IMR-90 (cell line): ENCODE measurements at regions of chr14 and their contacts with region 1.

Region 1: DNA sequence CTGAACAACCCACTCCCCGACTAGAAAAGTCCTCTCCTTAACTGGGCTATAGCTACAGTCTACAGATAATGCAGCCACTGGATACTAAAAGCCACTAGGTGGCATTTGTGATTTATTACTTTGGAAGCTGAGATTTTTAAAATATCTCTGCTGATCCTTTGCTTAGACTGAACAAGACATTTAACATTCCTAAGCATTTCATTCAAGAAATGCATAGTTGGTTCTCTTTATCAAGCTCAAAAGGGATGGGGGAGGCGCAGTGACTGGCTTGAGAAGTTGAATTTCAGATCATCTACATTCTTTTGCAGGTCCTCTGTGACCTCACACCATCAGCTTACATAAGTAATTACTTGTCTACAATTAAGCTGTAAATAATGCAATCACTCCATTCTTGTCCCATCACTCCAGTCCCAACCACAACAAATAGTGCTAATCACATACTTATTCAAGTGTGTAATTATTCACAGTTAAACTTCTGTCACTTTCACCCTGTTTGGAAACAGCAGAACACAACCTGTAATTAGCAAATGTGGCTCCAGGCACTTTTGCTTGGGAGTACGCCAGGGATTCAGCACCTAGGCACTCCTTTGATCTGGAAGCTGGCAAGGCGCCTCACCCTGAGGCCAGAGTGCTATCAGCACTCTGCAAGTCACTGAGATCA is 203.6 kb downstream of the NOVA1 start:
- DNase-seq: peak; percentile 12
- ATAC-seq: peak; percentile 89
- H3K4me3 ChIP-seq: no peak overlapping the region
- H3K27ac ChIP-seq: no peak overlapping the region
- H3K4me1 ChIP-seq: no peaks in the 10 kb centered on the region
- H3K27me3 ChIP-seq: no peaks in the 10 kb centered on the region
- CTCF ChIP-seq: peak; percentile 46
- POLR2A ChIP-seq: no peak
- RAD21 ChIP-seq: peak; percentile 48

Region 2: DNA sequence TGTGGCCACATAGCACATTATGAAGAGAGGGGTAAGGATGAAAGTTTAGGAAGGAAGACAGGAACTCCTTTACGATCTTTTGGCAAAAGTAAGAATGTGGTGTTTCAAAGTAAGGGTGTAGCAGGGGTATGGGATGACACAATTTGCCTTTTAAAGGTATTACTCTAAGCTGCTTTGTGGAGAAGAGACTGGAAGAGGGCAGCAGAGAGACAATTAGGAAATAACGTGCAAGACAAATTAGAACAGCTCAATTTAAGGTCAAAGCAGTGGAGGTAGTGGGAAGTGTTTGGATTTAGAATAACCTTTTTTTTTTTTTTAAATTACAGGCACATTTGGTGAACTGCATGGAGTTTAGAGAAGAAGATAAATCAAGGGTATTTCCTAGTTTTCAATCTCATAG is 139.1 kb before region 1 on chr14:
- CTCF ChIA-PET with region 1: no interaction called
- POLR2A ChIA-PET with region 1: no interaction called
- dilution Hi-C with region 1: no loop called
- in situ Hi-C with region 1: no loop called
- intact Hi-C with region 1: loop called (anchors 1 kb)
- DNase-seq: peak; percentile 31
- ATAC-seq: peak; percentile 63
- H3K4me3 ChIP-seq: no peak overlapping the region
- H3K27ac ChIP-seq: no peak overlapping the region
- H3K4me1 ChIP-seq: no peaks in the 10 kb centered on the region
- H3K27me3 ChIP-seq: no peaks in the 10 kb centered on the region
- CTCF ChIP-seq: peak; percentile 56
- POLR2A ChIP-seq: no peak
- RAD21 ChIP-seq: peak; percentile 59

Region 3: DNA sequence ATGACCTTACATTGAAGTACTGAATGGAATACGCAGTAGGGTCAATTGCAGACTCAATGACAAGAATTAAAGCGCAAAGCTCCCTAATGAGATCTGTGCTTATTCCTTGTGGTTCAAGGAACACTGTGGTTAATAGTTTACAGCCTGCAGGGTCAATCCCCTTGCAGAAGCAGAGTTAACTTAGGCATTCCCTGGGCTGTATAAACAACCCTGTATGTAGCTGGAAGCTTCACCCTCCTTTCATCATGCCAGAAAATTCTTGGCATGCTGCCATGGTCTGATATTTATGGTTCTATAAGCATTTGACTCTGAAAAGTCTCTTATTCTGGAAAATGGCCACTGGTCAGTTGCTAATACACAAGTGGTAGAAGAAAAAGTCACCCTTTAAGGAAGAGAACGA is 24.2 kb before region 1 on chr14:
- CTCF ChIA-PET with region 1: no interaction called
- POLR2A ChIA-PET with region 1: no interaction called
- dilution Hi-C with region 1: no loop called
- in situ Hi-C with region 1: no loop called
- intact Hi-C with region 1: no loop called
- DNase-seq: peak; percentile 4
- ATAC-seq: peak; percentile 51
- H3K4me3 ChIP-seq: no peak overlapping the region
- H3K27ac ChIP-seq: no peak overlapping the region
- H3K4me1 ChIP-seq: no peaks in the 10 kb centered on the region
- H3K27me3 ChIP-seq: no peaks in the 10 kb centered on the region
- CTCF ChIP-seq: no peak
- POLR2A ChIP-seq: no peak
- RAD21 ChIP-seq: no peak

Region 4: DNA sequence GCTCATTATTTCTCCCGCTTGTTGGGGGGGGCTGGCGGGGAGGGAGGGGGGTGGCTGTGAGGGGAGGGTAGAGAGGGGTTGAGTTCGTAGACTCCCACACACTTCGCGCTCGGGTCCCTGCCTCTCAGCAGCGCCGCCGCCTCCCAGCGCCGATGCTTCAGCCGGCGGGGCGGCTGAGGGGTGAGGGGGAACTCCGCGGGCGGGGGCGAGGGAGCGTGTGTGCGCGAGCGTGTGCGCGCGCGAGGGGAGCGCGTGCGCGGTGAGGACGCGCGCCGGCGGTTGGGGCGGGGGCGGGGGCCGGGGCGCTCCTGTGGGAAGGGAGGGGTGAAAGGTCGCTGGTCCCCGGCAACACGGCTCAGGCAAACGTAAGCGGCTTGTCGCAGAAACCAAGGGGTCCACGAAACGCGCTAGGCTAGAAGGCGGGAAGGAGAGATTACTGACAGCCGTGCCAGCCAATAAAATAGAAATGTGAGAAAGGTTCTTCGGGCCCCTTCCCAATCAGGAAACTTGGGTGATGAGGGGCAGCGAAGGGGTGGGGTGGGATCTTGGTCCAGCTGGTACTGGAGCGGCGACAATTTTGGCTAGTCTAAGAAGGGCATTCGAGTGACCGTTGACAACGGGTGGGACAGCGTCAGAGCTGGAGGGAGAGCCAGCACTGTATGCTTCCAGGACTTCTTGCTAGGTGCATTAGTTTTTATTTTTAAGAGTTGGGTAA is 204.0 kb after region 1 on chr14:
- CTCF ChIA-PET with region 1: no interaction called
- POLR2A ChIA-PET with region 1: no interaction called
- dilution Hi-C with region 1: no loop called
- in situ Hi-C with region 1: no loop called
- intact Hi-C with region 1: loop called (anchors 5 kb)
- DNase-seq: peak; percentile 82
- ATAC-seq: peak; percentile 85
- H3K4me3 ChIP-seq: peak overlapping the region; percentile 95
- H3K27ac ChIP-seq: no peak overlapping the region; the same call in 1 of the 2 replicates
- H3K4me1 ChIP-seq: no peaks in the 10 kb centered on the region
- H3K27me3 ChIP-seq: peaks cover 8% of the 10 kb centered on the region
- CTCF ChIP-seq: no peak
- POLR2A ChIP-seq: no peak
- RAD21 ChIP-seq: no peak

Region 5: DNA sequence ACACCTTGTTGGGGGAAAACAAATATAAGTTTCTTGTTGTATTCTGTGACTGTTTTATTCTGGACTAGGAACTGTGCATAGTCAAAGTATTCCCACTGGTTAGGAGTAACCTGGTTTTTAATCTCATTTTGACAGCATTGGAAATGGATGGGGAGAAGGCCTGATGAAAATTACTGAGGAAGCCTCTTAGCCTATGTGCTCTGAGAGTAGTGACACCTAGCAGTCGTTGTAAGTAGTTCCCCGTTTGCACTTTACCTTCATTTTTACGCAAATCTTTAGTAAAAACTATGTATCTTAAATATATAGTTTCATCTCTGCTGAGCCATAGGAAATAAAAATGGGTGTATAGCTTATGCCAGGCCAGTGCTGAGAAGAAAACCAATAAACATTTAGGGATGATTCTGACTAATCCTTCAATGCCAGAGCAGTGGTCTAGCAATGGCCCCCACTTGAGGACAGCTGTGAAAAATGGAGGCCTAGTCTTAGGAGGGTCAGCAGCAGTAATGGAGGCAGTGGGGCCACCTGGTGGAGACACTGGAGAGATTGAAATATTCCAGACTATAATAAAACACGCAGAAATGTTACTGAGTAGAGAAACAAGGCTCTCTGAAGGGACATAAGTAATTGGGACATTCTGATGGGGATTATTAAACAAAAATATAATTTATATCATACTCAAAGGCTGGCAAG is 336.8 kb after region 1 on chr14:
- CTCF ChIA-PET with region 1: no interaction called
- POLR2A ChIA-PET with region 1: no interaction called
- dilution Hi-C with region 1: no loop called
- in situ Hi-C with region 1: no loop called
- intact Hi-C with region 1: loop called (anchors 1 kb)
- DNase-seq: peak; percentile 3
- ATAC-seq: peak; percentile 57; the same call in 1 of the 2 replicates
- H3K4me3 ChIP-seq: no peak overlapping the region
- H3K27ac ChIP-seq: no peak overlapping the region
- H3K4me1 ChIP-seq: no peaks in the 10 kb centered on the region
- H3K27me3 ChIP-seq: no peaks in the 10 kb centered on the region
- CTCF ChIP-seq: peak; percentile 50
- POLR2A ChIP-seq: no peak
- RAD21 ChIP-seq: peak; percentile 56

Region 6: GRCh38 chr14:26917086-26917485 is 522.8 kb after region 1 on chr14:
- CTCF ChIA-PET with region 1: no interaction called
- POLR2A ChIA-PET with region 1: no interaction called
- dilution Hi-C with region 1: no loop called
- in situ Hi-C with region 1: no loop called
- intact Hi-C with region 1: loop called (anchors 5 kb)
- DNase-seq: peak; percentile 2
- ATAC-seq: no peak
- H3K4me3 ChIP-seq: no peak overlapping the region
- H3K27ac ChIP-seq: no peak overlapping the region
- H3K4me1 ChIP-seq: no peaks in the 10 kb centered on the region
- H3K27me3 ChIP-seq: no peaks in the 10 kb centered on the region
- CTCF ChIP-seq: peak; percentile 44
- POLR2A ChIP-seq: no peak
- RAD21 ChIP-seq: peak; percentile 37; the same call in 1 of the 2 replicates

Region 7: GRCh38 chr14:26984311-26985177 is 590.3 kb after region 1 on chr14:
- CTCF ChIA-PET with region 1: no interaction called
- POLR2A ChIA-PET with region 1: no interaction called
- dilution Hi-C with region 1: no loop called
- in situ Hi-C with region 1: no loop called
- intact Hi-C with region 1: loop called (anchors 1 kb)
- DNase-seq: peak; percentile 31
- ATAC-seq: peak; percentile 53; the same call in 1 of the 2 replicates
- H3K4me3 ChIP-seq: no peak overlapping the region
- H3K27ac ChIP-seq: no peak overlapping the region
- H3K4me1 ChIP-seq: no peaks in the 10 kb centered on the region
- H3K27me3 ChIP-seq: no peaks in the 10 kb centered on the region
- CTCF ChIP-seq: peak; percentile 52
- POLR2A ChIP-seq: no peak
- RAD21 ChIP-seq: peak; percentile 44